PC-9 (cell line): ENCODE measurements at regions of chr12 and their contacts with region 1.

Region 1: GRCh38 chr12:63103494-63104131 is 47.4 kb downstream of the AVPR1A start:
- DNase-seq: no peak
- H3K4me3 ChIP-seq: no peak overlapping the region
- H3K27ac ChIP-seq: no peak overlapping the region
- H3K4me1 ChIP-seq: no peaks in the 10 kb centered on the region
- H3K27me3 ChIP-seq: no peaks in the 10 kb centered on the region
- CTCF ChIP-seq: peak; percentile 91

Region 2: GRCh38 chr12:62588916-62589315 is 514.7 kb before region 1 on chr12:
- CTCF ChIA-PET with region 1: no interaction called
- POLR2A ChIA-PET with region 1: no interaction called
- intact Hi-C with region 1: no loop called
- DNase-seq: no peak
- H3K4me3 ChIP-seq: no peak overlapping the region
- H3K27ac ChIP-seq: no peak overlapping the region
- H3K4me1 ChIP-seq: no peaks in the 10 kb centered on the region
- H3K27me3 ChIP-seq: no peaks in the 10 kb centered on the region
- CTCF ChIP-seq: no peak

Region 3: DNA sequence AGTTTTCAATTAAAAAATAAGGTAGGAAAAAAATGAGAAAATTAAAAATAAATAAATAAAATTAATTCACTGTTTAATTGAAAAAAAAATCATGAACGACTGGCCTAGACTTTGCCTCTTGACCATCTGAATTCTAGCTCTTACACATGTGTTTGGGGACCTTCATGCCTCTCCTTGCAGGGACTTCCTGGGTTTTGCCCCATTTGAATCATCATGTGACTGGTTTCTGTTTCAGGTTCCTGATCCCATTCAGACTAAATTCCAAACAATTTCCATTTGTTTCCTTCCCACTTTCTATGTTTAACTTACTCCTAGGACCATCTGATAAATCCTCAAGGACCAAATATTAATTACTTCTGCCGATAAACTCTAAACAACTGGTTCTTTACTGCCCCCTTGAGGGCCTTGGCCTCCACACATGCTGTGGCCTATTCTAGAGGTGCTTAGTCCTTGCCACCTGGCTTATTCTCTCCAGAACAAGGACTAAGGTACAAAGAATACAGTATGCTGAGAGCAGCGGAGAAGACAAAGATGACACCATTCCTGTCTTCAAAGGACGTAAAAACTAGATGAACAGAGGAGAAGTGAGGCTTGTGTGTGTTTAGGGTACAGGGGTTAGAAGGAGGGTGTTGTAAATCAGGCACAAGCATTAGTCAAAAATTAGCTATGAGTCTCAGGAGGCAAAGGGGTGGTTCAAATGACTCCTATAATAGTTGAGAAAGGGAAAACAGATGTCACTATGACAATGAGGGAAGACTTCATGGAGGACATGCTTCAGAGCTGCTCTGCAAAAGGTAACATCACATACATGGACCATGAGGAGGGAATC is 173.1 kb after region 1 on chr12:
- CTCF ChIA-PET with region 1: no interaction called
- POLR2A ChIA-PET with region 1: no interaction called
- intact Hi-C with region 1: loop called (anchors 10 kb)
- DNase-seq: peak in 1 of 2 experiments; percentile 25
- H3K4me3 ChIP-seq: no peak overlapping the region
- H3K27ac ChIP-seq: no peak overlapping the region
- H3K4me1 ChIP-seq: no peaks in the 10 kb centered on the region
- H3K27me3 ChIP-seq: no peaks in the 10 kb centered on the region
- CTCF ChIP-seq: peak; percentile 81

Region 4: DNA sequence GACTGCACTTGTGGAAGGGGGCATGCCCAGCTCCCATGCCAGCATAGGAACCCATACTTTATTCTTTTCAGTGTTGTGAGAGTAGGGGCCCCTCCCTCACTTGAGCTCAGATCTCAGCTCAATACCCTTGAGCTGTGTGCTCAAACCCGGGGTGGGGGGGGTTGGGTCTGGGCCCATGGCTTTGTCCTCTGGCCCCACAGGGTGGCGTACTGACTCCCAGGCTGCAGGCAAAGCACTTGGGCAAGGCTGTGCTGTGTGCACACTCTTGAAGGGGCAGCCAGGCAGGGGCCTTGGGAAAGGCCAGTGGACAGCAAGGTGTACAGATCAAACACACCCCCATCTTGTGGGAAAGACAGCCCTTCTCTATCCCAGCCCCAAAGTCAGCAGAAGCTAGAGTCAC is 1935.7 kb after region 1 on chr12:
- CTCF ChIA-PET with region 1: no interaction called
- POLR2A ChIA-PET with region 1: no interaction called
- intact Hi-C with region 1: no loop called
- DNase-seq: no peak
- H3K4me3 ChIP-seq: no peak overlapping the region
- H3K27ac ChIP-seq: no peak overlapping the region
- H3K4me1 ChIP-seq: no peaks in the 10 kb centered on the region
- H3K27me3 ChIP-seq: peaks cover 32% of the 10 kb centered on the region
- CTCF ChIP-seq: no peak